ENCODE measurements at regions of chr11 and their contacts with region 1.

Region 1: DNA sequence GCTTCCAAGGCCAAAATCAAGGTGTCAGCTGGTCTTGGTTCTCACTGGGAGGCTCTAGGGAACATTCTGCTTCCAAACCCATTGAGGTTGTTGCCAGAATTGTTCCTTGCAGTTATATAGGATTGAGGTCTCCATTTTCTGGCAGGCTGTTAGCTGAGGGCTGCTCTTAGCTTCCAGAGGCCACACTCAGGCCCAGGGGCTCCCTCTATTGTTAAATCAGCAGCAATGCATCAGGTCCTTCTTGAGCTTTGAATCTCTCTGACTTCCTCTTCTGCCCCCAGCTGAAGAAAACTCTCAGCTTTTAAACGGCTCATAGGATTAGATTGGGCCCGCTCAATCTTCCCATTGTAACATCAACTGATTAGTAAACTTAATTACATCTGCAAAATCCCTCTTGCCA is 39.3 kb upstream of the BSX start:
- DNase-seq: peak; percentile 79
- CTCF ChIP-seq: peak; percentile 78

Region 2: DNA sequence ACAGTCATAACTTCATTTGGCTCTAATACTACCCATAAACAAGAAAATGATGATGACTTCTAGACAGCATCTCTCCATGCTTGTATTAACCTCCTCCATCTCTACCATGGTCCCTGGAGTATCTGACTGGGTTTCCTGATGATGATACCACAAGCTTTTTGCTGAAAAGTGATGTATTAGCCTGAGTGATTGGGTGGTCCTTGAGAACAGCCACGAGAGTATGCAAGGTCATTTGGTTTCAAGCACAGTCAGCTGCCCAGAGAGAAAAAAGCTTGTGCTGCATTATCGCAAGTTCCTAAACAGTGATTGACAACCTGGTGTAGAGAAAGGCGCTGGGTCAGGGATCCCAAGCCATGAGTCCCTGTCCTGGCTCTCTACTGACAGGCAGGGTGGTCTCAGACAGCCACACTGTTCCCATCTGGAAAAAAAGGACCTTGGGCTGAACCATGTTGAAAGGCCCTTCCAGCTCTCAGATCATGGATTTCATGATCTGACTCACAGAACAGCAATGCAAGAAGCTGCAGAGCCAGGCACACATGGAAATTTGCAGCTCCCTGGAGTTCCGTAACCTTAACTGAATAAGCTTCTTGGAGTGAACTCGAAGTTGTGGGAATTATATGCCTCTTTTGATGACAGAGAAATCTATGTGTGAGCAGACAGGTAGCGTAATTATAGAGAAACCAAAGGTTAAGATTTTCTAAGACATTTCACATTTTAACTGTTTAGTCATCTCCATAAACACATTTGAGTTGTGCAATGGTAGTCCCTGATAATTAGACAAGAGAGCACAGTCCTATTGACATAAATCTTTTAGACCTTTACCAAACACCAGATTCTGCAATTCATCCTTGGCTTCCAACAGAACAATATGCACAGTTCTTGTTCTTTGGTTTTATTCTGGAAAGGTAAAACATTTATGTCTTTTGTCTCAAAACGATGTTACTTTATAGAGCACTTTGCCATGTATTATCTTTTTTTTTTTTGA is 419.5 kb before region 1 on chr11:
- in situ Hi-C with region 1: loop called (anchors 25 kb)
- DNase-seq: no peak
- CTCF ChIP-seq: no peak

Region 3: DNA sequence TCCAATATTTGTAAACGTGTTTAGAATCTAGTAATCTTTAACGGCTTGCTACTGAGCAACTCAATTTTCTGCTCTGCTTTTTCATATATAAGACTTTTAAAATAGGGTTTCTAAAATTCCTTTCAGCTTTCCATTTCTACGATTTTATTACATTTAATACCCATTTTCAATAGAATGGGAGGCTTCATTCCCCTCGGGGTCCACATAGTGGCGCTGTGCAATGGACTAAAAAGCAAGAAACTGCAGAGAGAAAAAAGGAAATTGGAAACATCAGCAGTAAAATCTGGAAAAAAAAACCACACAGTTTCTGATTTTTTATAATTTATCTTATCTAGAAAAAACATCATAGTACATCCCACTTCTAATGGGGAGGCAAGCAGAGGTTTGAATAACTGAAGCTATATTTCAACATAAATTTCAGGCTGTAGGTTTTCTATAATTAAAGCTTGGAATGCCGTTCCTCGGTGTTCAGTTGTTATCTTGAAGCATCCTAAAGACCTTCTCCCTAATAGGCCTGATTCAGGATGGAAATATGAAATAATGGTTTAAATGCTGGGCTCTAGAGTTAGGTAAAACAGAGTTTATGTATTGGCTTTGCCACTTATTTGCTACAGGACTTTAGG is 157.2 kb before region 1 on chr11:
- in situ Hi-C with region 1: loop called (anchors 10 kb)
- DNase-seq: no peak
- CTCF ChIP-seq: peak; percentile 87

Region 4: DNA sequence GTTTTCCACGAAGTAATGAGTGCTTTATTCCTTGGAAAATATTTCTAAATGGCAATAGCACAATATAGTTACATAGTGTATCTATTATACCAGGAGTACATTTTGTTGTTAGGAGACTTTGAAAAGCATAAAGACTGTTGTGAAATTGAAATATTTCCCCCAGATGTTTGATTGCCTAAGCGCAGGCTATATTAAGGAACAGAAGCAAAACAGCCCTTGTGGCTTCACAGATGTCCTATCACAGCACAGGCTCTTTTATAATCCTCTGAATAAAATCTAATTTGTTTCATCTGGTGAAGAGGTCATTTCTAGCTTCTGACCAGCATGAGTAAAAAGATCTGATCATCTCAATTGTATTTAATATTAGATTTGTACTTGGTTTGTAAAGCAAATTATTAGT is 87.6 kb before region 1 on chr11:
- in situ Hi-C with region 1: no loop called
- DNase-seq: no peak
- CTCF ChIP-seq: no peak

Region 5: DNA sequence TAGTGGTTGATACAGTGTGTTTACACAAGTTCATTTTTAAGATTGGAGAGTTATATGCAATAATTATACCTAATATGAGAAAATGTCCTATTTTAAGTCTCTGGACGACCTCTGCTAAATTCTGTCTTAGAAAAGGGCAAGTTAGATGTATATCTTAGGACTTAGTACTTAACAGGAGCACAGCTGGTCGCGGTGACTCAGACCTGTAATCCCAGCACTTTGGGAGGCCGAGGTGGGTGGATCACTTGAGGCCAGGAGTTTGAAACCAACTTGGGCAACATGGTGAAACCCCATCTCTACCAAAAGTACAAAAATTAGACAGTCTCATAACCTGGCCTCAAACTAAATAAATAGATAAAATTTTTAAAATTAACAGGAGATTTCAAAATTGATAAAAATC is 66.5 kb before region 1 on chr11:
- in situ Hi-C with region 1: no loop called
- DNase-seq: no peak
- CTCF ChIP-seq: no peak